ENCODE measurements at regions of chr1 and their contacts with region 1.

Region 1: DNA sequence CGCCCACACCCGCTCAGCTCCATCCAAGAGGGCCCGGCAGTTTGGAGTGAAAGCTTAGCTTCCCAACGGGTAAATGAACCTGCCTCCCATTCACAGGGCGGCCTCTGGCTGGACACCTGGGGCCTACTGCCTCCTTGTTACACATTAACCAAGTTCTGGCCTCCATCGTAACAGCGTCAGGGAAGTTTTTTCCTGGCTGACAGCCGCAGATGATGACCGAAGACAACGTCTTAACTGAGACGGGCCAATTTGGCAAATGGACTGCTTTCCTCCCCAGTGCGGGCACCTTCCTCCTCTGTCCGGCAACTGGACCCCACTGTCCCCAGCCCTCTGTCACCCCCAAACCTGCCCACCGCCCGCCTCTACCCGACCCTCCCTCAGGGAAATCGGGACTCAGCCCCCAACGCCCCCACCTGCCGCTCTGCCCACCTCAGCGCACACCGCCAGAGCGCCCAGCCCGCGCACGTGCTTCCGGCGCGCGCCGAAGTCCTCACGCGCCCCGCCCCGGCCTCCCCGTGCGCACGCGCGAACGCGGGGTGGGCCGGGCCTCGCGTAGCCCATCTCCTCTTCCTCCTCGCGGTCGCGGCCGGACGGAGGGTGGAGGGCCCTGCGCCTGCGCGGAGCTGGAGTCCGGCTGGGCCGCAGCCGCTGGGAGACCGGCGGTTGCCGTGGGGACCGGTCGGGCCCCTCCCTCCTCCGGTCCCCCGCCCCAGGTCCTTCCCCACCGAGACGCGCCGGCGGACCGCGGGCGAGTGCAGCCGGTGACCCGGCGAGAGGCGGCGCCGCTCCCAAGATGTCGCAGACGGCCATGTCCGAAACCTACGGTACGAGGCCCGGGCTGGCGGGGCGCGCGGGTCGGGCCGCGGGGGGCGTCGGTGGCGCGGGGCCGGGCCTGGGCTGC is at the start of gene RAB4A:
- DNase-seq: peak; percentile 60 to 91 (median 80)
- H3K4me3 ChIP-seq: peak within 1 kb of the TSS; percentile 60 to 94 (median 80)
- H3K27ac ChIP-seq: peak within 1 kb of the TSS in 58 of 59 donors; percentile 6 to 93 (median 82)
- H3K27me3 ChIP-seq: no peaks in the 10 kb centered on the region
- CTCF ChIP-seq: peak in 5 of 56 donors; percentile 6 to 46 (median 12)
- total RNA-seq, gene RAB4A: 64.3 to 117 (median 86.8) TPM

Region 2: DNA sequence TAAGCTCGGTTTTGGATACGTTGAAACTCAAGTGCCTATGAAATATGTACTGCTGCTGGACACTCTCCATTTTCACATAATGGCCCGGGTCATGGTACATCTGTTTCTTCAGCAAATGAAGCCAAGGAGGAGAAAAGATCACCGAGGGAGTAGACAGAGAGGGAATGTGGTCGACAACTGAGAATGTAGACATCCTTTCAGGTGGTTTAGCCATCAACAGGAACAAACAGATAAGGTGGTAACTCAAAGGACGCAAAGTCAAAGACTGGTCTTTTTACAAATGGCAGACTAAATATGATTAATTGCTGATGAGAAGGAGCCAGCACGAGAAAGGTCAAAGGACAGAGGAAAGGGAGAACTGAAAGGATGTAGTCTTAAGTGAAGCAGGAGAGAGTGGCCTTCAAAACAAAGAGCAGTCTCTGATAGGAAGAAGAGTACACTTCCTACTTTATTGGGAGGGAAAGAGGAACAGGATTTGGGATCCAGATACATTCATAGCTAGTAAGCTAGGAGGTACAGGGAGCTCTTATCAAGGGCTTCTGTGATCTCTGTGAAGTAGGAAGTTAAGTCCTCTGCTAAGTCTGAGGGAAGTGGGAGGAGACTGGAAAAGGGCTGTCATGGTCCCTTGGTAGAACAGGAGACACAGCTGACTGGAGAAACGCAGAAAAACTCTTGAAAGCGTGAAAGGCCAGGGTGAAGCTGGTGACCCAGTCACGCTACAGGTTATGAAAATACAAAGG is 209.0 kb after region 1 on chr1:
- intact Hi-C with region 1: loop called in 1 of 2 experiments (anchors 1 kb)
- DNase-seq: no peak
- H3K4me3 ChIP-seq: peak overlapping the region in 2 of 59 donors; percentile 15 to 32
- H3K27ac ChIP-seq: peak overlapping the region in 57 of 59 donors; percentile 19 to 89 (median 80)
- H3K27me3 ChIP-seq: no peaks in the 10 kb centered on the region
- CTCF ChIP-seq: no peak

Region 3: GRCh38 chr1:229537894-229538293 is 267.1 kb after region 1 on chr1:
- intact Hi-C with region 1: no loop called
- DNase-seq: no peak
- H3K4me3 ChIP-seq: no peak overlapping the region
- H3K27ac ChIP-seq: peak overlapping the region in 2 of 59 donors; percentile 29 to 55
- H3K27me3 ChIP-seq: no peaks in the 10 kb centered on the region
- CTCF ChIP-seq: no peak